Heart right ventricle (tissue), 16 donors: ENCODE measurements at regions of chr19 and their contacts with region 1.

Region 1: DNA sequence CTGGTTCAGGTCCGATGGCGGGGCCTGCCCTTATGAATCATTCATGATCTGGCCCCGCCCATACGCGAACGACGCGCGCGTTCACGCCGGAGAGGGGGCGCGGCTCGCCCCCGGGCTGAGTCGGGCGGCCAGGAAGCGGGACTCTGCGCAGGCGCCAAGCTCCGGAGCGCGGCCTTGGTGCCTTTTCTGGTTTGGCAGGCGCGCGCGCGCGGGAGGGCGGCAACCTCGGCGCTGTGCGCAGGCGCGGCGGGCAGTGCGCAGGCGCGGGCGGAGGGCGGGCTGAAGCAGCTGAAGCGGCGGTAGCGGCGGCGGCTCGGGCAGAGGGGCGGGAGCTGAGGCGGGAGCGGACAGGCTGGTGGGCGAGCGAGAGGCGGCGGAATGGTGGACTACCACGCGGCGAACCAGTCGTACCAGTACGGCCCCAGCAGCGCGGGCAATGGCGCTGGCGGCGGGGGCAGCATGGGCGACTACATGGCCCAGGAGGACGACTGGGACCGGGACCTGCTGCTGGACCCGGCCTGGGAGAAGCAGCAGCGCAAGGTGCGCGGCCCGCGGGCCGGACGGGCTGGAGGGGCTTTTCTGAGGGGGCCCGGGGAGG is at the start of gene ACTN4:
- DNase-seq: peak; percentile 99 to 100
- ATAC-seq: peak; percentile 84 to 95 (median 91)
- H3K4me3 ChIP-seq: peak within 1 kb of the TSS; percentile 74 to 99 (median 86)
- H3K27ac ChIP-seq: peak within 1 kb of the TSS; percentile 77 to 99 (median 96)
- H3K4me1 ChIP-seq: peaks cover 18 to 40% (median 36%) of the 10 kb centered on the region in 9 donors
- H3K27me3 ChIP-seq: no peaks in the 10 kb centered on the region
- CTCF ChIP-seq: no peak
- total RNA-seq, gene ACTN4: 129 to 291 (median 149) TPM

Region 2: DNA sequence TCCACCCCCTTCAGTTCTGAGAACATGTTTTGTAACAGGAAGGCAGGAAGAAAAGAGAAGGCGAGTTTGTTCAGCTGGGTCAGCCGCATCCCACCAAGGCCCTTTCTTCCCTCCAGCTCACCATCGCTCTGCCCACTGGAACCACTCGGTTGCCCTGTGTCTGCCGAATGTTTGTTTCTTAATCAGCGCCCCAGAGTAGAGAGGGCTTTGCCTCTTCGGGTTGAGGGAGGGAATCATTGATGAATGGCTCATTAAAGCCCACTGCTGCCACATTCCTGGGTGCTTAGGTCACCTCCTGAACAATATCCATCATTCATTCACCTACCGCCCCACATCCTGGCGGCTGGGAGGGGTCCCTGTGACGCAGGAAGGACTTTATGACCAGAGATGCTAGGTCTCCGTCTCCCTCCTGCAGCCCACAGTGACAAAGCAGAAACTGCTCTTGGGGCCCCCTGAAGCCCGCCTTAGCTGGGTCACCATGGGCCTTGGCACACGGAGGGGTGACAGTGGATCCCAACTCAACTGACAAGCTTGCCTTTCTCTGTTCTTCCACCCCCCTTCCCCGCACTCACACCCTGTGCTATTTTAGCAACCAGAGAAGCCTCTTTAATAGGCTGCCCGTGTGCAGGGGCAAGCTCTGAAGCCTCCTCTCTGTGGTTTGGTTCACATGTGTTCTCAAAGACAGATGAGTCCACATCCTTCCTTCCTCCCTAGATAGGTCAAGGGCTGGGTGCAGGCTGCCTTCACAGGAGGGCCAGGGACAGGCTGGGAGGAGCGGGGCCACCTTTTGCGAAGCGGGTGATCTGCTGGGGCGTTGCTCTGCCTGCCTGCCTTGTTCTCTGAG is 46.1 kb after region 1 on chr19:
- intact Hi-C with region 1: loop called in 3 of 10 experiments (anchors 5 kb)
- DNase-seq: peak in 1 of 2 donors; percentile 66
- ATAC-seq: peak; percentile 17 to 41 (median 29)
- H3K4me3 ChIP-seq: peak overlapping the region in 3 of 10 donors; percentile 4 to 12 (median 6)
- H3K27ac ChIP-seq: peak overlapping the region; percentile 58 to 95 (median 90)
- H3K4me1 ChIP-seq: peaks cover 58 to 99% (median 97%) of the 10 kb centered on the region in 9 donors
- H3K27me3 ChIP-seq: no peaks in the 10 kb centered on the region
- CTCF ChIP-seq: no peak

Region 3: DNA sequence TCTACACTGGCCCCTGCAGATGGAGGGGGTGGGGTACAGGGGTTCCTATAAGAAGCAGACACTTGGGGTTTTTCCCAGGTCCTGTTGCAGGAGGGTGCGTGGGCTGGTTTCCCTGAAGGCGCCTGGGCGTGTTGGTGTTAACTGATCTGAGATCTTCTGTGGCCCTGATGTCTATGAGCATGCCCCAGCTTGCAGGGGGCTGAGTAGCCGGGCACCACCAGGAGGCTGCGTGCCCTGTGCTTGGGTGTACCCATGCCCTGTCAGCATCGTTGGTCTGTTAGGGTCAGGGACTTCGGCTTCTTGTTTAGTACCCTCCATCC is 51.5 kb after region 1 on chr19:
- intact Hi-C with region 1: loop called in 3 of 10 experiments (anchors 5 kb)
- DNase-seq: no peak
- ATAC-seq: no peak
- H3K4me3 ChIP-seq: no peak overlapping the region
- H3K27ac ChIP-seq: peak overlapping the region; percentile 3 to 95 (median 66)
- H3K4me1 ChIP-seq: peaks cover 55 to 96% (median 88%) of the 10 kb centered on the region in 9 donors
- H3K27me3 ChIP-seq: no peaks in the 10 kb centered on the region
- CTCF ChIP-seq: no peak

Region 4: GRCh38 chr19:38711726-38712153 is 64.3 kb after region 1 on chr19:
- intact Hi-C with region 1: loop called in 8 of 10 experiments (anchors 2 to 5 kb)
- DNase-seq: peak in 1 of 2 donors; percentile 60
- ATAC-seq: peak in 7 of 8 donors; percentile 12 to 59 (median 37)
- H3K4me3 ChIP-seq: no peak overlapping the region
- H3K27ac ChIP-seq: peak overlapping the region; percentile 63 to 93 (median 84)
- H3K4me1 ChIP-seq: peaks cover 75 to 100% (median 90%) of the 10 kb centered on the region in 9 donors
- H3K27me3 ChIP-seq: no peaks in the 10 kb centered on the region
- CTCF ChIP-seq: no peak

Region 5: GRCh38 chr19:38718747-38719543 is 71.5 kb after region 1 on chr19:
- intact Hi-C with region 1: loop called in 6 of 10 experiments (anchors 2 to 5 kb)
- DNase-seq: peak; percentile 70 to 80
- ATAC-seq: peak; percentile 17 to 57 (median 38)
- H3K4me3 ChIP-seq: no peak overlapping the region
- H3K27ac ChIP-seq: peak overlapping the region; percentile 58 to 93 (median 89)
- H3K4me1 ChIP-seq: peaks cover 45 to 98% (median 76%) of the 10 kb centered on the region in 9 donors
- H3K27me3 ChIP-seq: no peaks in the 10 kb centered on the region
- CTCF ChIP-seq: peak; percentile 13 to 62 (median 39)

Region 6: DNA sequence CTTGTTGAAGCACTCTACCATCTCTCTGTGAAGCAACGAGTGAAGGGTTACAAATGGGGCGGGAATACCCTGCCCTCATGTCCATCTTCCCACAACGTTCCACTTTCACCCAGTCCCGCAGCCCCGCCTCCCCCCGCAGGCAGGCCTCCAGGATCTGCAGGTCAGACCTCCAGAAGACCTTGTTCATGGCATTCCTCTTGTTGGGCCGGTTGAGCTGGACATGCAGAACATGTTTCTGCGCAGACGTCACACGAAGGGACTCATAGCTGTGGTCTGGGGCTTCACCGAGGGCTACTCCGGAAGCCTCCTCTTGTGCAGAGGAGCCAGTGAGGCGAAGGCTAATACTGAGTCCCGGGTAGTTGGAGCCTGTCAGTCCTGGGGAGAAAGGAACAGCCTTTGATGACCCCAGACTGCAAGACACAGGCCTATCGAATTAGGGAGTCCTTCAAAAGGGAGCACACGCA is 183.7 kb after region 1 on chr19:
- intact Hi-C with region 1: loop called in 3 of 10 experiments (anchors 5 to 10 kb)
- DNase-seq: peak; percentile 54 to 75
- ATAC-seq: peak; percentile 35 to 67 (median 62)
- H3K4me3 ChIP-seq: peak overlapping the region; percentile 64 to 92 (median 74)
- H3K27ac ChIP-seq: peak overlapping the region; percentile 86 to 99 (median 94)
- H3K4me1 ChIP-seq: peaks cover 8 to 55% (median 40%) of the 10 kb centered on the region in 9 donors
- H3K27me3 ChIP-seq: no peaks in the 10 kb centered on the region
- CTCF ChIP-seq: no peak